H1 (cell line): ENCODE measurements at regions of chr10 and their contacts with region 1.

Region 1: DNA sequence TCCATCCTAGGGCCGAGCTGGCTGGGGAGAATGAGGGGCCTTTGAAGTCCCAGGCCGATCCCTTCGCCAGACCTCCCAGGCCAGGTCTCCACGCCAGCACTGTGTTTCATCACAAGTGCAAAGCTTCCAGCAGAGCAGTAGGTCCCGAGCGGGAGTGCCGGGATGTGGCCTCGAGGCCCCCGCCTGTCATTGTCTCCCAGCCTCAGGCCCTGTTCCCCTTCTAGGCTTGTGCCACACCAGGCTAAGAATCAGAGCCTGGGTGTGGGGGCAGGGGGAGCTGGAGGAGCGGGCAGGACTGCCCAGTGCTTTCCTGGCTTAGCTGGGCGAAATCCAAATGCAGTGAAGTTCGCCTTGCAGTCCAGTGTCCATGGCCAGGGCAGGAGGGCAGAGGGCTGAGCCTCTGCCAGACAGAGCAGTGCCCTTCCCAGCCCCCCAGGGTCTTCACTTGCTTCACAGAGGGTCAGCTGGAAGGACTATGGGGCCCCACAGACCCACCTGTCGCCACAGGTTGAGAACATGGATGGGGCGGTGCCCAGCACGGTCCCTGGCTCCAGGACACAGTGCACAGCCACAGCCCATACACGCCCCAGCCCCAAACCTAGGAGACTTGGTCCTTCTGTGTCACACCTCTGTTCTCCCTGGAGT is 20.2 kb upstream of the PFKFB3 start:
- DNase-seq: no peak
- H3K4me3 ChIP-seq: no peak overlapping the region
- H3K27ac ChIP-seq: no peak overlapping the region
- H3K4me1 ChIP-seq: peaks cover 0 to 6% (median 0%) of the 10 kb centered on the region in 4 experiments; a peak in 1 of 7 replicates
- H3K27me3 ChIP-seq: no peaks in the 10 kb centered on the region
- CTCF ChIP-seq: no peak
- EP300 ChIP-seq: no peak
- POLR2A ChIP-seq: no peak
- RAD21 ChIP-seq: no peak

Region 2: DNA sequence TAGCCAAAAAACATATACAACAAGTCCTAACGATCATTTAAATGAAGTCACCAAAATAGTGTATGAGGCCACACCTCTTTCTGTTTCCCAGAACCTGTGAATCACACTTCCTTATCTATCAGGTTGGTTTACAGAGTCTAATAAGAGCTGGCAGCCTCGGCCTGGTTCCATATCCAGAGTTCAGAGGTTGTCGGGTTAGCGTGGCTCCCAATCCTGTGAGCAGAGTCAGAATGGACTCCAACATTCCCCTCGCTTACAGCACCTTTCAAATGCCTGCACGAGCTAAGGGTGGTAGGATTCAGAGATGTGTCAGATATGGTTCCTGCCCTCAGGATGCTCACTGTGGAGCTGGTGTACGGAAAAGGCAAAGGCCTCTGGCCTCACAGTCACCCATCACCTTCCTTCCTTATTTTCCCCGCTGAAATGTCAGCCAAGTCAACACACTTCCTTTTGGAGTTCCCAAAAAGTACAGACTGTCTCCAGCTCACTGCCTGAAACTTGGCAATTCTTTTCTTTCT is 211.2 kb before region 1 on chr10:
- CTCF ChIA-PET with region 1: no interaction called
- POLR2A ChIA-PET with region 1: no interaction called
- DNase-seq: peak in 1 of 2 experiments; percentile 8
- H3K4me3 ChIP-seq: no peak overlapping the region
- H3K27ac ChIP-seq: no peak overlapping the region
- H3K4me1 ChIP-seq: no peaks in the 10 kb centered on the region; a peak in 1 of 7 replicates
- H3K27me3 ChIP-seq: peaks cover 3 to 13% (median 12%) of the 10 kb centered on the region in 4 experiments
- CTCF ChIP-seq: no peak
- EP300 ChIP-seq: no peak
- POLR2A ChIP-seq: no peak
- RAD21 ChIP-seq: no peak

Region 3: GRCh38 chr10:6163364-6164270 is 19.0 kb before region 1 on chr10:
- CTCF ChIA-PET with region 1: interaction called, 7 read pairs
- POLR2A ChIA-PET with region 1: interaction called, 10 read pairs
- DNase-seq: peak in 1 of 2 experiments; percentile 94
- H3K4me3 ChIP-seq: peak overlapping the region; percentile 39 to 88 (median 54)
- H3K27ac ChIP-seq: no peak overlapping the region
- H3K4me1 ChIP-seq: peaks cover 0 to 2% (median 0%) of the 10 kb centered on the region in 4 experiments; a peak in 1 of 7 replicates
- H3K27me3 ChIP-seq: no peaks in the 10 kb centered on the region
- CTCF ChIP-seq: no peak
- EP300 ChIP-seq: no peak
- POLR2A ChIP-seq: peak in 1 of 2 experiments; percentile 49; a peak in 1 of 3 replicates
- RAD21 ChIP-seq: no peak

Region 4: DNA sequence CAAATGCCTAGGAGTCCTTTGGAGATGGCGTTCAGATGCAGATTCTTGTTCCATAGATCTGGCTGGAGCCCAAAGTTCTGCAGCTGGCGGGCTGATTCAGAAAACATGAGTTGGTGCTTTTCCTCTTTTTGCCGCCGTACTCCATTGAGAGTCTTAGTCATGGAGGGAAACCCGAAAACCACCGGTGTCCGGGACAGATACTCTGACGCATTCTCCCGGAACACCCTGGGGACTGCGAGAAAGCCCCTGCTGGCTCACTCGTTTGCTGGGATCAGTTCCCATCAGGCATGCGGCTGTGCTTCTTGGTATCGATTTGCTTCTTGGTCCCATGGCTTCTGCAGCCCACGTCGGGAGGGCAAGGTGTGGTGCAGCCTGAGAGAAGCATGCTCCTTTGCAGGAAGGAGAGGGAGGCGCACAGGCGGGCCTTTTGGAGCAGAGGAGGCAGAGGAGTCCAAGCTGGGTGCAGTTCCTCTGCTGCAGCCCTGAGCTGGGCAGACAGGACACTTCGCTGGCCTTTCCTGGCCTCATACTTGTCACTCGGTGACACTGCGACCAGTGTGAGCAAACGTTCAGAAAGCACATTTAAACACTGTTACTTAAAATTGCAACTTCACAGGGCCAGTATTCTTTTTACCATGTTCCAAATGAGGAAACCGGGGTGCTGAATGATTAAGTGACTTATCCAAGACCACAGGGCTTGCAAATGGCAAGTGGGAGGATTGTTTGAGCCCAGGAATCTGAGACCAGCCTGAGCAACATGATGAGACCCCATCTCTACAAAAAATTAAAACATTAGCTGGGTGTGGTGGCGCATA is 10.5 kb before region 1 on chr10:
- CTCF ChIA-PET with region 1: interaction called, 29 read pairs
- POLR2A ChIA-PET with region 1: interaction called, 10 read pairs
- DNase-seq: no peak
- H3K4me3 ChIP-seq: no peak overlapping the region
- H3K27ac ChIP-seq: no peak overlapping the region
- H3K4me1 ChIP-seq: no peaks in the 10 kb centered on the region
- H3K27me3 ChIP-seq: no peaks in the 10 kb centered on the region
- CTCF ChIP-seq: no peak
- EP300 ChIP-seq: no peak
- POLR2A ChIP-seq: no peak
- RAD21 ChIP-seq: no peak